CD8-positive, alpha-beta memory T cell (primary cell): ENCODE measurements at regions of chr20 and their contacts with region 1.

Region 1: GRCh38 chr20:38893565-38894090 is 32.6 kb upstream of the FAM83D start:
- DNase-seq: peak; percentile 72 to 85 (median 74)
- H3K4me3 ChIP-seq: peak overlapping the region; percentile 49
- H3K4me3 Mint-ChIP-seq: peak overlapping the region; percentile 29 to 83 (median 71)
- H3K27ac ChIP-seq: peak overlapping the region; percentile 56
- H3K27ac Mint-ChIP-seq: peak overlapping the region; percentile 93 to 99 (median 96)
- H3K4me1 ChIP-seq: peaks cover 14% of the 10 kb centered on the region
- H3K4me1 Mint-ChIP-seq: peaks cover 32 to 67% (median 44%) of the 10 kb centered on the region in 3 donors
- H3K27me3 ChIP-seq: no peaks in the 10 kb centered on the region
- H3K27me3 Mint-ChIP-seq: no peaks in the 10 kb centered on the region

Region 2: GRCh38 chr20:38790200-38791053 is 103.2 kb before region 1 on chr20:
- CTCF ChIA-PET with region 1: interaction called, 48 read pairs
- POLR2A ChIA-PET with region 1: no interaction called
- DNase-seq: peak; percentile 24 to 69 (median 37)
- H3K4me3 ChIP-seq: no peak overlapping the region
- H3K4me3 Mint-ChIP-seq: peak overlapping the region in 4 of 7 donors; percentile 44 to 77 (median 62)
- H3K27ac ChIP-seq: no peak overlapping the region
- H3K27ac Mint-ChIP-seq: peak overlapping the region in 4 of 8 donors; percentile 62 to 95 (median 82)
- H3K4me1 ChIP-seq: peaks cover 5% of the 10 kb centered on the region
- H3K4me1 Mint-ChIP-seq: peaks cover 10 to 18% (median 11%) of the 10 kb centered on the region in 3 donors
- H3K27me3 ChIP-seq: no peaks in the 10 kb centered on the region
- H3K27me3 Mint-ChIP-seq: peaks cover 0 to 2% of the 10 kb centered on the region in 2 donors

Region 3: DNA sequence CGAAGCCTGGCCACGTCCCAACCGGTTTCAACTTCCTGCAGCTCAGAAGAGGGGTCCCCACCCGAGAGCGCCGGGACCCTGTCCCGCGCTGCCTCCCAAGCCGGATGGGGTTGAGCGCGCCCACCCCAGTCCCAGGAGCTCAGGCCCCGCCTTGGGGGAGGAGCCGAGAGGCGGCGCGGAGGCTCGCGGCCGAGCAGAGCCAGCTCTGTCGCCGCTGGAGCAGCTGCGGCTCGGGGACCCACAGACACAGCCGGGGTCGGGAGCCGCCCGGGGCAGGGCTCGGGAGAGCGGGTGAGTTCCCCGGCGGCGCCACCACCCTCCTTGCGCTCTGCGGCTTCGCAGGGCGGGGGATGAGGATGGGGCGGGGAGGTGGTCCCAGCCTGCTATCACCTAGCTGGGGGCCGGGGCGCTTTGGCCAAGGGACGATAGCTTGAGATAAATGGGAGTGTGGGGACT is 88.1 kb before region 1 on chr20 and contains the start of gene PPP1R16B:
- CTCF ChIA-PET with region 1: interaction called, 39 read pairs
- POLR2A ChIA-PET with region 1: interaction called, 5 read pairs
- DNase-seq: peak; percentile 76 to 88 (median 83)
- H3K4me3 ChIP-seq: peak within 1 kb of the TSS; percentile 82
- H3K4me3 Mint-ChIP-seq: peak within 1 kb of the TSS; percentile 89 to 96 (median 91)
- H3K27ac ChIP-seq: peak within 1 kb of the TSS; percentile 98
- H3K27ac Mint-ChIP-seq: peak within 1 kb of the TSS; percentile 93 to 100 (median 98)
- H3K4me1 ChIP-seq: peaks cover 51% of the 10 kb centered on the region
- H3K4me1 Mint-ChIP-seq: peaks cover 51 to 56% (median 54%) of the 10 kb centered on the region in 3 donors
- H3K27me3 ChIP-seq: no peaks in the 10 kb centered on the region
- H3K27me3 Mint-ChIP-seq: peaks cover 0 to 7% of the 10 kb centered on the region in 2 donors
- total RNA-seq, gene PPP1R16B: 167 to 171 TPM

Region 4: DNA sequence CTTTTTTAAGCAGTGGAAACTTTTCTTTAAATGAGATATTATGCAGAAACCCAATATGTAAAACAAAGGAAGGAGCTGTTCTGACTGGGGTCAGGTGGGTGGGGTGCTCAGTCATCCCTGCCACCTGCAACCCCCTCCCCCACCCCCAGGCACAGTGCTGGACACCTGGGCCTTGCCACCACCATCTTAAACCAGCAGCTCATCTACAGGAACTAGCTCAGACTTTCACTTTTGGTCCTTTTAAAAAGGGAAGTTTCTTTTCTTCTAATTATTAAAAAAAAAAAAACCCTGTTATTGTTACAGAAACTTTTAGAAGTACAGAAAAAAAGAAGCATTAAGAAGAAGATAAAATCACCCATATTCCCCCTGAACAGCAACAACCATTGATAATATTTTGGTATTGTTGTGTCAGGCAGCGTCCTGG is 51.1 kb before region 1 on chr20:
- CTCF ChIA-PET with region 1: interaction called, 17 read pairs
- POLR2A ChIA-PET with region 1: interaction called, 10 read pairs
- DNase-seq: peak in 2 of 5 donors; percentile 45 to 65
- H3K4me3 ChIP-seq: peak overlapping the region; percentile 48
- H3K4me3 Mint-ChIP-seq: peak overlapping the region; percentile 15 to 92 (median 74)
- H3K27ac ChIP-seq: peak overlapping the region; percentile 89
- H3K27ac Mint-ChIP-seq: peak overlapping the region; percentile 93 to 100 (median 98)
- H3K4me1 ChIP-seq: peaks cover 69% of the 10 kb centered on the region
- H3K4me1 Mint-ChIP-seq: peaks cover 77 to 98% (median 86%) of the 10 kb centered on the region in 3 donors
- H3K27me3 ChIP-seq: no peaks in the 10 kb centered on the region
- H3K27me3 Mint-ChIP-seq: peaks cover 0 to 3% of the 10 kb centered on the region in 2 donors

Region 5: GRCh38 chr20:38859070-38859690 is 34.4 kb before region 1 on chr20:
- CTCF ChIA-PET with region 1: interaction called, 38 read pairs
- POLR2A ChIA-PET with region 1: interaction called, 3 read pairs
- DNase-seq: peak in 2 of 5 donors; percentile 46 to 65
- H3K4me3 ChIP-seq: no peak overlapping the region
- H3K4me3 Mint-ChIP-seq: peak overlapping the region; percentile 26 to 86 (median 64)
- H3K27ac ChIP-seq: peak overlapping the region; percentile 41
- H3K27ac Mint-ChIP-seq: peak overlapping the region; percentile 81 to 97 (median 93)
- H3K4me1 ChIP-seq: peaks cover 78% of the 10 kb centered on the region
- H3K4me1 Mint-ChIP-seq: peaks cover 84 to 94% (median 93%) of the 10 kb centered on the region in 3 donors
- H3K27me3 ChIP-seq: no peaks in the 10 kb centered on the region
- H3K27me3 Mint-ChIP-seq: no peaks in the 10 kb centered on the region

Region 6: DNA sequence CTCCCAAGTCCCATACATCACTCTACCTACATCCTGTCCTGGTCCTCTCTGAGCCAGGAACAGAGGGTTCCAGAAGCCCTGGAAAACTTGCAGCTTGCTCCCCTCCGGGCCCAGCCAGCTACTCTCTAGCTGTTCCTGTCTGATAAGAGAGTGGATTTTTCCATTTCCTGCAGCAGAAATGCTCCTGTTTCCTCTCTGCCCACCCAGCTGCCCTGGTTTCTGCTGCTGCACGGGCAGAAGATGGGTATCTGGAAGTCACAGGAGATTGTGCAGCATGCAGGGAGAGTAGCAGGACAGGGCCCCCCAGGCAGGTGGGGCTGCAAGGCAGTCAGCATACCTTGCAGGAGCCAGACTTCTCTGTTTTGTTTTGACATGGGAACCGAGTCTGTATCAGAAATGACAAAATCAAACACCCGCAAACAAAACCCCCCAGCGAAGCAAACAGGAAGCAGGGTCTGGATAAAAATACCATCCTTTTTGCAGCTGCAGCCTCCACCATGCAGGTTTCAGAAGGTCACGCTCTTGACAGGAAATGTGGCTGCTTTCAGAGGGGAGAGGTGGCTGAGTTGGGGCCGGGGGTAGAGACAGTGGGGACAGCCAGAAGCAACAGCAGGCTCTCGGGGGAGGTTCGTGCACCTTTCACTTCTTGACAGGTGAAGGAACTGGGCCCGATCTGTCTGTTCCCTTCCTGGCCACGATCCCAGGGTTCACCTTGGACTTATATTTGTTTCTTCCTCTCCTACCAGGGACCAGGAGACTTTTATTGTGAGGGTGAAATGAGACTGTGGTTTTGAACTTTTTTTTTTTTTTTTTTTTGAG is 18.2 kb before region 1 on chr20:
- CTCF ChIA-PET with region 1: interaction called, 51 read pairs
- POLR2A ChIA-PET with region 1: interaction called, 32 read pairs
- DNase-seq: peak; percentile 65 to 90 (median 76)
- H3K4me3 ChIP-seq: peak overlapping the region; percentile 61
- H3K4me3 Mint-ChIP-seq: peak overlapping the region; percentile 78 to 93 (median 88)
- H3K27ac ChIP-seq: peak overlapping the region; percentile 85
- H3K27ac Mint-ChIP-seq: peak overlapping the region; percentile 97 to 100 (median 100)
- H3K4me1 ChIP-seq: peaks cover 65% of the 10 kb centered on the region
- H3K4me1 Mint-ChIP-seq: peaks cover 83 to 100% (median 99%) of the 10 kb centered on the region in 3 donors
- H3K27me3 ChIP-seq: no peaks in the 10 kb centered on the region
- H3K27me3 Mint-ChIP-seq: no peaks in the 10 kb centered on the region

Region 7: GRCh38 chr20:38883081-38883980 is 10.3 kb before region 1 on chr20:
- CTCF ChIA-PET with region 1: interaction called, 51 read pairs
- POLR2A ChIA-PET with region 1: interaction called, 10 read pairs
- DNase-seq: peak in 1 of 5 donors; percentile 57
- H3K4me3 ChIP-seq: no peak overlapping the region
- H3K4me3 Mint-ChIP-seq: peak overlapping the region in 5 of 7 donors; percentile 52 to 84 (median 71)
- H3K27ac ChIP-seq: peak overlapping the region; percentile 18
- H3K27ac Mint-ChIP-seq: peak overlapping the region; percentile 87 to 99 (median 95)
- H3K4me1 ChIP-seq: peaks cover 23% of the 10 kb centered on the region
- H3K4me1 Mint-ChIP-seq: peaks cover 61 to 88% (median 70%) of the 10 kb centered on the region in 3 donors
- H3K27me3 ChIP-seq: no peaks in the 10 kb centered on the region
- H3K27me3 Mint-ChIP-seq: peaks cover 0 to 2% of the 10 kb centered on the region in 2 donors

Region 8: DNA sequence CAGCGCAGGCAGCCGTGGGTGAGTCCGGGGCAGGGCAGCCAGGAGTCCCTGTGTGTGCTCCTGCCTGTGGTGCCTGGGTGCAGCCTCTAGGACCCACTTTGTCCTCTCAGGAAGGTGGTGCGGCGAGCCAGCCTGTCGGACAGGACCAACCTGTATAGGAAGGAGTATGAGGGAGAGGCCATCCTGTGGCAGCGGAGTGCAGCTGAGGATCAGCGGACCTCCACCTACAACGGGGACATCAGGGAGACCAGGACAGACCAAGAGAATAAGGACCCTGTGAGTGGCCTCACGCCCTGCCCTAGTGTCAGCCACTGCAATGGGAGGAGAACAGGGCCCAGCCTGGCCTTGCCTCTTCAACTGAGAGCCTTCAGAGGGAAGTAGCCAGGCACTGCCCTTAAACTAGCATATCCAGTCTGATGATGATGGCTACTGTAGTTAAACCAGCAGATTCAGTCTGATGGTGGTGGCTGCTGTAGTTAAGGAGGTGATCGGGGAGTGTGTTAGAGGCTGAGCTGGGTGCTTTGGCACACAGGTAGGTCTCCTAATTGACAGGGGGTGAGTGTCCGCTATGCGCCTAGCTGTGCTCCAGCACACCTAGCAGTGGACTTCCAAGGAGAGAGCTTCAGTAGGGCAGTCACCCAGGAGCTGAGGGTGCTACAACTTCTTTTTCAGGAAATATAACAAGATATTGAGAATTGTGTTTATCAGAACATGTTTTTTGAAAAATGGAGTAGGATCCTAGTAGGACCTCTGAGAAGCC is 14.5 kb after region 1 on chr20:
- CTCF ChIA-PET with region 1: no interaction called
- POLR2A ChIA-PET with region 1: no interaction called
- DNase-seq: no peak
- H3K4me3 ChIP-seq: no peak overlapping the region
- H3K4me3 Mint-ChIP-seq: peak overlapping the region in 1 of 7 donors; percentile 4
- H3K27ac ChIP-seq: no peak overlapping the region
- H3K27ac Mint-ChIP-seq: peak overlapping the region in 2 of 8 donors; percentile 40 to 66
- H3K4me1 ChIP-seq: no peaks in the 10 kb centered on the region
- H3K4me1 Mint-ChIP-seq: peaks cover 10 to 18% (median 15%) of the 10 kb centered on the region in 3 donors
- H3K27me3 ChIP-seq: no peaks in the 10 kb centered on the region
- H3K27me3 Mint-ChIP-seq: no peaks in the 10 kb centered on the region

Region 9: GRCh38 chr20:38935285-38935684 is 41.7 kb after region 1 on chr20:
- CTCF ChIA-PET with region 1: no interaction called
- POLR2A ChIA-PET with region 1: no interaction called
- DNase-seq: no peak
- H3K4me3 ChIP-seq: no peak overlapping the region
- H3K4me3 Mint-ChIP-seq: no peak overlapping the region
- H3K27ac ChIP-seq: no peak overlapping the region
- H3K27ac Mint-ChIP-seq: no peak overlapping the region
- H3K4me1 ChIP-seq: peaks cover under 1% of the 10 kb centered on the region
- H3K4me1 Mint-ChIP-seq: peaks cover 1 to 6% (median 6%) of the 10 kb centered on the region in 3 donors
- H3K27me3 ChIP-seq: no peaks in the 10 kb centered on the region
- H3K27me3 Mint-ChIP-seq: peaks cover 0 to 1% of the 10 kb centered on the region in 2 donors